Prostate gland (tissue), 2 donors: ENCODE measurements at regions of chr4 and their contacts with region 1.

Region 1: DNA sequence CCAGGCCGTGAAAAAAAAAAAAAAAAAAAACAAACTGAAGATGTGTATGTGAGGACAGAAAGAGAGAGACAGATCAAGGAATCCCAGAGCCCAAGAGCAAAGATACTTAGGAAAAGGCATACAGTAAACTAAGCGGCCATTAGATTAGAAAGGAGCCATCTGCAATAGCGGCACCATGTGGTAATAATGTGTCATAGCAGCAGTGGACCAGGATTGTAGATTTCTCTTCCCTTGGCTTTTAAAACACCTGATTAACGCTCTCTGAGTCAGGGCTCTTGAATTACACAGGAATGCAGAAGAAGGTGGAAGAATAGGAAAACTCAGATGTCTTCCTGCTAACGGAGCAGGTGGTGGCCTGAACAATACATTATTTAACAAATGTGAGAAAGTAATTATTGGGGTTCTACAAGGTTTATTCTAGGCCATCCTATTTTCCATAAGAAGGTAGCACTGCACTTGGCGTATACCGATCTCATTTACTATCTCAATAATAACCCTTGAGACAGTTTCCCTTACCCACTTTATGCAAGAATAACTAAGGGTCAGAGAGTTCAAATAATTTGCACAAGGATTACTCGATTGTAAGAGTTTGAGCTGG is 182.7 kb downstream of the KCNIP4 start:
- DNase-seq: peak; percentile 7
- H3K4me3 ChIP-seq: no peak overlapping the region
- H3K27ac ChIP-seq: no peak overlapping the region
- H3K4me1 ChIP-seq: no peaks in the 10 kb centered on the region
- H3K27me3 ChIP-seq: no peaks in the 10 kb centered on the region
- CTCF ChIP-seq: peak; percentile 34 to 62 (median 50)
- POLR2A ChIP-seq: no peak

Region 2: DNA sequence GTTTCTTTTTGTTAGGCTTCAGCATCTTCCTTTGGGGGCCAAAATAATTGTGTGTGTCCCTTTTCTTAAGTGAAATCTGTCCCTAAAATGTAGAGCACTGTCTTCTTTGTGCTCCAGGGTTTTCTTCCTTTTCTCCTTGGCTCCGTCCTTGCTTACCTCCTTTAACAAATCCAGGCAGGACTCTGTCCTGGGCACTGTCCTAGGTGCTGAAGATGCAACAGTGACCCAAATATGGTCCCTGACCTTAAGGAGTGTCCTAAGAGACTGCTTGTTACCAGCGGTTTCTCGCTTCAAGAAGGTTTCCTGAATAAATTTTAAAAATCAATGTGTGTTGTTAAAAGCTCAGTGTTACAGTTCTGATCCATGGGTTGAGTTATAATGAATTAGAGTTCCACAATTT is 289.2 kb before region 1 on chr4:
- intact Hi-C with region 1: no loop called
- DNase-seq: no peak
- H3K4me3 ChIP-seq: no peak overlapping the region
- H3K27ac ChIP-seq: no peak overlapping the region
- H3K4me1 ChIP-seq: no peaks in the 10 kb centered on the region
- H3K27me3 ChIP-seq: no peaks in the 10 kb centered on the region
- CTCF ChIP-seq: no peak
- POLR2A ChIP-seq: no peak

Region 3: GRCh38 chr4:21512353-21512752 is 253.6 kb before region 1 on chr4:
- intact Hi-C with region 1: loop called (anchors 2 kb)
- DNase-seq: peak; percentile 4
- H3K4me3 ChIP-seq: no peak overlapping the region
- H3K27ac ChIP-seq: no peak overlapping the region
- H3K4me1 ChIP-seq: no peaks in the 10 kb centered on the region
- H3K27me3 ChIP-seq: no peaks in the 10 kb centered on the region
- CTCF ChIP-seq: peak in 3 of 4 experiments; percentile 31 to 43 (median 36)
- POLR2A ChIP-seq: no peak